ENCODE measurements at regions of chr10 and their contacts with region 1.

Region 1: DNA sequence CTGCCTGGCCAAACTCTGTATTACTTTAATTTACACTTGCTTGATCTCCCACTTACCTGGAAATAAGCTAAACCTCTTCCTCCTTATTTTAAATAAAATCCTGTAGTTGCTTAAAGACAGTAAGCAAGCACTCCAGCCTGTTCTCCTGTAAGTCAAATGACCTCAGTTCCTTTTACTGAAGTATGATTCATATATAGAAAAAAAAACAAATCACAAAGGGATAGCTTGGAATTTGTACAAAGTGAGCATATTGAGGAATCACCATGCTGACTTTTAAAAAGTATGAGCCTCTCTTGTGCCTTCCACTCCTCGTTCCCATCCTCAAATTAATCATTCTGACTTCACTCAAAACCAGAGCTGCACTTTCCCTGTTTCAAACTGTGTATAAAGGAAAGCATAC is 52.0 kb downstream of the C10orf90 start:
- DNase-seq: no peak
- ATAC-seq: no peak
- H3K4me3 ChIP-seq: no peak overlapping the region
- H3K27ac ChIP-seq: no peak overlapping the region
- H3K4me1 ChIP-seq: peaks cover 0 to 12% (median 0%) of the 10 kb centered on the region in 9 donors
- H3K27me3 ChIP-seq: peaks cover 0 to 12% (median 0%) of the 10 kb centered on the region in 7 donors
- CTCF ChIP-seq: no peak

Region 2: DNA sequence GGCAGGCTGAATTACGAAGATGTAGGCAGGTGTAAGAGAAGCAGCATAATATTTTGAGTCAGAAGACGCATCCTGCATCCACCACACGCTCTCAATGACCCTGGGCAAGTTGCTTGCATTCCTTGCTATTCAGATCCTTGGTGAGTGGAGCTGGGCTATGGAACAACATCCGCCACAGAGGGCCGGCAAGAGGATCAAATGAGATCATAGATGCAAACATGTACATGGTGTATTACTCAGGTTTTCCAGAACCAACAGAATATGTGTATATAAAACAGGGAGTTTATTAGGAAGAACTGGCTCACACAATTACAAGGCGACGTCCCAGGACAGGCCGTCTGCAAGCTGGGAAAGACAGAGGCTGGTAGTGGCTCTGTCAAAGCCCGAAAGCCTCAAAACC is 281.7 kb before region 1 on chr10:
- intact Hi-C with region 1: no loop called
- DNase-seq: no peak
- ATAC-seq: no peak
- H3K4me3 ChIP-seq: no peak overlapping the region
- H3K27ac ChIP-seq: no peak overlapping the region
- H3K4me1 ChIP-seq: no peaks in the 10 kb centered on the region
- H3K27me3 ChIP-seq: peaks cover 0 to 5% (median 0%) of the 10 kb centered on the region in 7 donors
- CTCF ChIP-seq: no peak

Region 3: DNA sequence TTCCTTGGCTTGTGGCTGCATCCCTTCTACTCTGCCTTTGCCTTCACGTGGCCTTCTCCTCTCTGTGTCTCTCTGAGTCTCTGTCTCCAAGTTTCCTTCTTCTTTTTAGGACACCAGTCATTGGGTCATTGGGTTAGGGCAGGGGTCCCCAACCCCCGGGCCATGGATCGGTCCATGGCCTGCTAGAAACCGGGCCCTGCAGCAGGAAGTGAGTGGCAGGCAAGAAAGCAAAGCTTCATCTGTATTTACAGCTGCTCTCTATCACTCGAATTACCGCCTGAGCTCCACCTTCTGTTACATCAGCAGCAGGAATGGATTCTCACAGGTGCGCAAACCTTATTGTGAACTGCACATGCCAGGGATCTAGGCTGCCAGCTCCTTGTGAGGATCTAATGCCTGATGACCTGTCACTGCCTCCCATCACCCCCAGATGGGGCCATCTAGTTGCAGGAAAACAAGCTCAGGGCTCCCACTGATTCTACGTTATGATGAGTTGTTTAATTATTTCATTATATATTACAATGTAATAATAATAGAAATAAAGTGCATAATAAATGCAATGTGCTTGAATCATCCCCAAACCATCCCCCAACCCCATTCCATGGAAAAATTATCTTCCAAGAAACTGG is 238.8 kb after region 1 on chr10:
- intact Hi-C with region 1: loop called in 1 of 10 experiments (anchors 10 kb)
- DNase-seq: no peak
- ATAC-seq: no peak
- H3K4me3 ChIP-seq: no peak overlapping the region
- H3K27ac ChIP-seq: no peak overlapping the region
- H3K4me1 ChIP-seq: no peaks in the 10 kb centered on the region
- H3K27me3 ChIP-seq: peaks cover 0 to 8% (median 0%) of the 10 kb centered on the region in 7 donors
- CTCF ChIP-seq: peak in 1 of 9 donors; percentile 8